Aorta (tissue), 5 donors: ENCODE measurements at regions of chr11 and their contacts with region 1.

Region 1: DNA sequence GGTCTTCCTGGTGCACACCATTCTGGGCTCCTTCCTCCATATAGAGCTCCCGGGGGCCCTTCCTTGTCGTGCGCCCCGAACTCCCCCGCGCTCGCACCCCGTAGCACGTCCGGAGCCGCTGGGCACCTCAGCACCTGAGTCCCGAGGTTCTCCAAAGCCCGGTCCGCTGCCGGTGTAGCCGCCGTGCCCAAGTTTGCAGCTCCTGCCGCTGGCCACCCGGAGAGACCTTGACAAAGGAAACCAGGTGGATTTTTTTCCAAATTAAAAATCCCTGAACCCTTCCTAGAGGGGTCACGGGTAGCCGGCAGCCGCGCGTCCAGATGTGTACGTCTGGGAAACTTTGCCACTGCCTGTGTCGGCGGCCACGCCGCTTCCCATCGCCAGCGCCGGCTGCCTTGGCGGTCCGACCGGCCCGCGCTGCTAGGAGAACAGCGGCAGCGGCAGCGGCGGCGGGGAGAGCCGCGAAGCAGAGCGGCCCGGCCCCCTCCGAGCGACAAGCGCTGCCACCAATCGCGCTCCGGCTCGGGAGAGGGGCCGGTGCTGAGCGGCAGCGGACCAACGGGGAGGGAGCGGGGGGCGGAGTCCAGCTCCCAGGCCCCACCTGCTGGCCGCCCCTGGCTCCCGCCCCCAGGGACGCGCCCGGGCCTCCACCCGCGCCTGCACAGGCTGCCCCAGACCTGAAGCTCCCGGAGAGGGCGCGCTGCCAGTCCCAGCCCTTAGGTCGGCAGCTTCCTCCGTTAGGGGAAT is at the start of gene GALNT18:
- DNase-seq: peak; percentile 94 to 96
- ATAC-seq: peak; percentile 96
- H3K4me3 ChIP-seq: peak within 1 kb of the TSS; percentile 30 to 84
- H3K27ac ChIP-seq: peak within 1 kb of the TSS; percentile 6 to 65
- H3K4me1 ChIP-seq: peaks cover 0 to 5% of the 10 kb centered on the region in 2 donors
- H3K27me3 ChIP-seq: no peaks in the 10 kb centered on the region
- total RNA-seq, gene GALNT18: 37.3 to 60.6 TPM

Region 2: GRCh38 chr11:11463405-11463804 is 158.3 kb before region 1 on chr11:
- intact Hi-C with region 1: loop called in 1 of 2 experiments (anchors 10 kb)
- DNase-seq: no peak
- ATAC-seq: no peak
- H3K4me3 ChIP-seq: no peak overlapping the region
- H3K27ac ChIP-seq: no peak overlapping the region
- H3K4me1 ChIP-seq: peaks cover 0 to 3% of the 10 kb centered on the region in 2 donors
- H3K27me3 ChIP-seq: no peaks in the 10 kb centered on the region

Region 3: DNA sequence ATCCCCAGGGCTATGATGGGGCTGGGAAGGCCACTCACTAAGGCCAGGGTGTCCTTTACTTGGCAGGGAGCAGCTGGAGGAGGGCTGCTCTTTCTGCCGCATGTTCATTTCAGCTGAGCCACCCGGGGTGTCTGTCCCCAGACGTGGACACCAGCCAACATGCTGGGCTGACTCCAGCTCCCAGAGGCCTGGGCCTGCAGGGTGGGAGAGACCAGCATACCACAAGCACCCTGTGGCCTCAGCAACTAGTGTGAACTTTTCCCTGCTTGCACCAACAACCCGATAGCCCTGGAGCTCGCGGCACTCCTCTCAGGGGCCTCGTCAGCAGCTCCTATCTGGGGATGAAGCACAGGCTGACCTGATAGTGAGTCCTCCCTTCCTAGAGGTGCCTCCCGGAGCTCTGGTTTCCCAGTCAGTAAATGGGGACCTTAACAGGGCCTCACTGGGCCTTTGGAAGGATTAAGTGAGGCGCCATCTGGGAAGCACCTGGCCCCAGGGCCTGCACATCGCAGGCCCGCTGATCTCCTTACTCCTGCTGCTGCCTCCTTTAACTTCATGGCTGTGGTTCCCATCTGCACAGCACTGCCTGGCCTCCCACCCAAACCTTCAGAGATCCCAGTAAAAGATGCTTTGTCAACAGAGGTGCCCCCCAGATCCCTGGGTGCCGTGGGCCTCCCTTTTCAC is 83.3 kb before region 1 on chr11:
- intact Hi-C with region 1: loop called (anchors 5 to 10 kb)
- DNase-seq: peak; percentile 73 to 87
- ATAC-seq: peak; percentile 39
- H3K4me3 ChIP-seq: no peak overlapping the region
- H3K27ac ChIP-seq: peak overlapping the region in 1 of 2 donors; percentile 15
- H3K4me1 ChIP-seq: peaks cover 0 to 1% of the 10 kb centered on the region in 2 donors
- H3K27me3 ChIP-seq: no peaks in the 10 kb centered on the region

Region 4: GRCh38 chr11:11584446-11584810 is 37.3 kb before region 1 on chr11:
- intact Hi-C with region 1: loop called (anchors 2 to 5 kb)
- DNase-seq: no peak
- ATAC-seq: peak; percentile 67
- H3K4me3 ChIP-seq: no peak overlapping the region
- H3K27ac ChIP-seq: peak overlapping the region; percentile 86 to 91
- H3K4me1 ChIP-seq: peaks cover 11 to 15% of the 10 kb centered on the region in 2 donors
- H3K27me3 ChIP-seq: no peaks in the 10 kb centered on the region